ENCODE measurements at regions of chr4 and their contacts with region 1.

Region 1: DNA sequence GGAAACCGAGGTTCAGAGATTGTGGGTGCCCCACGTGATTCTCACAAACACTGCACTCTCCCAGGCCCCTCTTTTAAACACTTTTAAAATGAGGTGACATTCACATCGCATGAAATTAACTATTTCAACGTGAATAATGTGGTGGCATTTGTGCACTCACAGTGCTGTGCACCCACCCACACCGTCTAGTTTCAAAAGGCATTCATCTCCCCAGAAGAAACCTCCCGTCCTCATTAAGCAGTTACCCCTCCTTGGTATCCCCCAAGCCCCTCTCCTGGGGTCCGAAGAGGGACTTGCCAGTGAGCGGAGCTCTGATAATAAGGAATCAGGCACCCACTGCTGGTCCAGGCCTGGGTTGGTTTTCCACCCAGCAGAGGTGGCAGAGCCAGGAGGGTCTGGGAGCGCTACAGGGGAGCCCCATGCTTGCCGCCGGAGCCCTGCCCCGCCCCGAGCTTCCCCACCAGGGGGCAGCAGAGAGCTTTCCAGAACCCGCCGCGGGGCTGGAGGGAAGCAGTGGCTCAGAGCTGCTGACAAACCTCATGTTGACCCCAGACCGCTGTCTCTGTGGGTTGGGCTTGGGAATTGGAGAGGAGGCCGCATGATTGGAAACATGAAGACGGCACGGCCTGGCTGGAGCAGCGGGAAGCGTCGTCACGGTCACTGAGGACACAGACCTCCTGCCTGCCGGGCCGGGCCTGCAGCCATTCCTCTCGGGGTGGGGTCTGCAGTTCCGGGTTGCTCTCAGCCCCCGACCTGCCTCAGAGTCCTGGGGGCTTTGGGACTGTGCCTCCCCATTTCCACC is 27.5 kb upstream of the HTRA3 start:
- DNase-seq: peak; percentile 59
- H3K4me3 Mint-ChIP-seq: no peak overlapping the region
- H3K27ac Mint-ChIP-seq: no peak overlapping the region
- H3K4me1 Mint-ChIP-seq: no peaks in the 10 kb centered on the region
- H3K27me3 Mint-ChIP-seq: no peaks in the 10 kb centered on the region

Region 2: GRCh38 chr4:8176547-8177399 is 65.3 kb before region 1 on chr4:
- intact Hi-C with region 1: loop called (anchors 1 kb)
- DNase-seq: peak; percentile 15
- H3K4me3 Mint-ChIP-seq: no peak overlapping the region
- H3K27ac Mint-ChIP-seq: no peak overlapping the region
- H3K4me1 Mint-ChIP-seq: no peaks in the 10 kb centered on the region
- H3K27me3 Mint-ChIP-seq: no peaks in the 10 kb centered on the region

Region 3: DNA sequence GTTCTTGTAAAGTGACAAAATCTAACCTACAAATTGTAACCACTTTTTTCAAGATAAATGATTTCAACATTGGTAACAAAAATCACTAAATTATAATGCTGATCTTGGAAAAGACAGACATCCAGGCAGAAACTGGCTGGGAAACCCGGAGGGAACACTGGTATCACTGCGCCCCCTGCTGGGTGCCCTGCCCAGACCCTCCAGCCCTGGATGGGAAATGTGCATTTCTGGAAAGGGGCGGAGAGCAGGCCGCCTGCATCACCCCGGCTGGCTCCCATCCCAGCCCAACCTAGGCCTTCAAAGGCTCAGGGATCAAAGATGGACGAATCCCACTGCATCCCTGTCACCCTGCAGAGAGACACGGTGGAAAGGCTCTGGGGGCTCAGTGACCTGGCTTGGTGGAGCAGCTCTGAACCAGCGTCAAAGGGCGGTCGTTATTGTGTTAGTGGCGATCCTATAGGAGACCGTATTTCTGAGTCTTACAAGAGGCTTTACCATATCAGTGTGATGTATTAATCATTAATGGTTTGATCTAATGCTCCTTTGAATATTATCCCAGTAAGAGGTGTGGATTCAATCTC is 161.2 kb after region 1 on chr4:
- intact Hi-C with region 1: loop called (anchors 1 kb)
- DNase-seq: no peak
- H3K4me3 Mint-ChIP-seq: no peak overlapping the region
- H3K27ac Mint-ChIP-seq: no peak overlapping the region
- H3K4me1 Mint-ChIP-seq: no peaks in the 10 kb centered on the region
- H3K27me3 Mint-ChIP-seq: no peaks in the 10 kb centered on the region

Region 4: DNA sequence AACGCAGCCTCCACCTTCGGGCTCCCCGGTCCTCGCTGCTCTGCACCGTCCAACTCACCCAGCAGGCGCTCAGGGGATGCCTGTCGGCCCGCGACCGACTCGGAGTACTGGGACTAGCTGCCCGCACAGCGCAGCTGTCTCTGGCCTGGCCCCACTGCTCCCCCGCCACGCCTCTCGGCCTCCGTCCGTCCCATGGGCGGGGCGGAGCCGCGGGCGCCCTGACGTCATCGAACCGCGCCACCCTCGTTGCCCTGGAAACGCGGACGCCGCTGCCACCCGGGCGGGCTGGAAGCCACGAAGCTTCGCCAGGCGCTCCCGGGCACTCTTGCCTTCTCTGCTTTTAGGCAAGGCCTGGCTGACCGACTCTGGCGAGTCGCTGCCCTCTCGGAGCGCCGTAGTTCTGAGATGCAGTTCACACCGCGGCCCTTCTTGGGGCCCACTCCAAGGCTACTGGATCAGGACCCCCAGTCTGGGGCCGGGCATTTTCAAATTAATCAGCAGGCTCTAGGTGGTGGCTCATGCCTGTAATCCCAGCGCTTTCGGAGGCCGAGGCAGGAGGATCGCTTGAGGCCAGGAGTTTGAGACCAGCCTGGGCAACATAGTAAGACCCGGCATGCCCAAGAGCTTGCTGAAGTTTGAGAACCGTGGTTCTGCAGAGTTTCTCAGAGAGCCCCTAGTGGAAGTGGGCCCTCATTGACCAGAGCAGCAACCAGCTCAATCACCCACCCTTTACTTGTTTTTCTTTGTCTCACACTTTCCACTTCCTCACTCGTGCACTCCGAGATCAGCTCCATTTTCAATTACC is 186.4 kb after region 1 on chr4:
- intact Hi-C with region 1: loop called (anchors 1 kb)
- DNase-seq: peak; percentile 90
- H3K4me3 Mint-ChIP-seq: peak overlapping the region; percentile 93
- H3K27ac Mint-ChIP-seq: peak overlapping the region; percentile 81
- H3K4me1 Mint-ChIP-seq: peaks cover 17% of the 10 kb centered on the region
- H3K27me3 Mint-ChIP-seq: no peaks in the 10 kb centered on the region

Region 5: GRCh38 chr4:8506373-8507188 is 264.5 kb after region 1 on chr4:
- intact Hi-C with region 1: no loop called
- DNase-seq: no peak
- H3K4me3 Mint-ChIP-seq: no peak overlapping the region
- H3K27ac Mint-ChIP-seq: no peak overlapping the region
- H3K4me1 Mint-ChIP-seq: no peaks in the 10 kb centered on the region
- H3K27me3 Mint-ChIP-seq: no peaks in the 10 kb centered on the region

Region 6: DNA sequence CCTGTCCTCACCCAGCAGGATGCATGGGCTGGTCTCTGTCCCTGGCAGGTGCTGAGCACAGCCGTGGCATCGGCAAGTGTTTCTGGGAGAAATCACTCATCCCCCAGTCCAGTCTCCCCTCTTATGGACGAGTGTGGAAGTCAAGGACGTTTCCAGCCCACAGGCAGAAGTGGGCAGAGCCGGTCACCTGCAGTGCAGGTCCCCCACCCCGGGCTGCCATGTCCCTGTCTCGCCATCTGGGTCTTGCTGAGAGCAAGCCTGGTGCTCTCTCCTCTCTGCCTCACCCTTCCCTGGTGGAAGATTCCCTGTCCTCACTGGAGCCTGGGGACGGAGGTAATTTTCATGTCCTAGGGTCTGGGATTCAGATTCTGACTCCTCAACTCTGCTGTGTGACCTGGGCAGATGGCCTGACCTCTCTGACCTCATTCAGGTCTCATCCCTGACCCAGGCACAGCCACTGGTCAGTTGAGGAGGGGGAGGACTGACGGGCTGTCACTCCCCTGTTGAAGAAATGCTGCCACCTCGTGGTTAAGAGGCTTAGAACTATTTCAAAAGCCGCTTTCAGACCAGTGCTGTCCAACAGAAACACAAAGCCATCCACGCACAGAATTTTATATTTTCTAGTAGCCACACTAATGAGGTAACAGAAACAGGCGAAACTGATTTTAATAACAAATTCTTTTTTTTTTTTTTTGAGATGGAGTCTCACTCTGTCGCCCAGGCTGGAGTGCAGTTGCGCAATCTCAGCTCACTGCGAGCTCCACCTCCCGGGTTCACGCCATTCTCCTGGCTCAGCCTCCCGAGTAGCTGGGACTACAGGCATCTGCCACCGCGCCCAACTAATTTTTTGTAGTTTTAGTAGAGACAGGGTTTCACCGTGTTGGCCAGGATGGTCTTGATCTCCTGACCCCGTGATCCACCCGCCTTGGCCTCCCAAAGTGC is 352.3 kb after region 1 on chr4:
- intact Hi-C with region 1: loop called (anchors 1 kb)
- DNase-seq: no peak
- H3K4me3 Mint-ChIP-seq: no peak overlapping the region
- H3K27ac Mint-ChIP-seq: no peak overlapping the region
- H3K4me1 Mint-ChIP-seq: no peaks in the 10 kb centered on the region
- H3K27me3 Mint-ChIP-seq: peaks cover 17% of the 10 kb centered on the region